ENCODE measurements at regions of chr17 and their contacts with region 1.

Region 1: DNA sequence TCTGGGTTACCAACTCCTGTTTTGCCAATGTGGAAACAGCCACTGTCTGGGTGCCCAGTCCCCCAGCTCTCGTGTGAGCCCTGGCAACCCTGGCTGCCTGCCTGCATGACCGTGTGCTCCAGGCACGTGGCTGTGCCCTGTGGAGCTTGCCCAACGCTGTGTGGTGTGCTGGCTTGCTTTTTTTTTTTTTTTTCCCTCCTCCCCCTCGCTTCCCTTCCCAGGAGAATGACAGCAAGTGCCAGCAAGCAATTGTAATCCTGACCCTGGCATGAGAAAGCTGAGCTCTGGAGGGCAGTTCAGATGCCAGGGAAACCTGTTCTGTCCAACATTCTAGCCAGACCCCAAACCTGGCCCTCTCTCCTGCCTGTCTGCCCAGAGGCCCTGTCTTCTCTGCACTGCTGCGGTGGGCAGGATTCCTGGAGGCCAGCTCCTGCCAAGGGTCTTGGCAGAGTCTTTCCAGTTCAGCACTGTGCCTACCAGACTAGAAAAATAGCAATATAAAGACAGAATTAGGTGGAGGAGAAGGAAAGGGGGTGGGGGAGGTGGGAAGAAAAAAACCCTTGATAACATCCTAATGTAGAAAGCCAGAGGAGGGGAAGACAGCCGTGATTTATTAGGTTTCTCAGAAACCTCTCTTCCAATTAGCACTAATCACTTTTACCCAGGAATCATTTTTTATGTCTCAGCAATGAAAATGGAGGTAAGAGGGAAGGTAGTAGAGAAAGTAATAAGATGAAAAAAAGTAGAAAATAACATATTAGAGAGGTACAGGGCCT is 9.0 kb downstream of the HLF start:
- DNase-seq: peak; percentile 71 to 77
- ATAC-seq: peak; percentile 77 to 95 (median 92)
- H3K4me3 ChIP-seq: peak overlapping the region in 5 of 10 donors; percentile 0 to 19 (median 5)
- H3K27ac ChIP-seq: peak overlapping the region; percentile 44 to 89 (median 81)
- H3K4me1 ChIP-seq: peaks cover 8 to 86% (median 62%) of the 10 kb centered on the region in 9 donors
- H3K27me3 ChIP-seq: peaks cover 0 to 3% (median 0%) of the 10 kb centered on the region in 7 donors
- CTCF ChIP-seq: no peak

Region 2: DNA sequence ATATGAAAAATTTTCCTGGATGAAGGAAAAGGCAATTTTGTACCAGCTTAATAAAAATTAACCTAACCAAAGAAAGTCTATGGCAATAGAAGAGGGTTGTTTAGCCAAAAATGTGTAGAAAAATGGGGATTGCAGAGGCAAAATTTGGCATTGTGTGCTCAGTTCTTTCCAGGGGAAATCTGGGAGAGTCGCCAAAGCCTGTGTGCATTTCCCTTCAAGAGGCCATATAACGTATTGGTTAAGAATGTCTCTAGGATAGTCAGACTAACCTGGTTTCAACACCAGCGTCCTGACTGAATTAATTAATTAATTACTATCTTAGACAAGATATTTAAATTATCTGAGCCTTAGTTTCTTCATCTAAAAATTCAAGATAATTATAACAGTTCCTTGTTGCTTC is 53.8 kb before region 1 on chr17:
- intact Hi-C with region 1: no loop called
- DNase-seq: no peak
- ATAC-seq: no peak
- H3K4me3 ChIP-seq: no peak overlapping the region
- H3K27ac ChIP-seq: no peak overlapping the region
- H3K4me1 ChIP-seq: no peaks in the 10 kb centered on the region
- H3K27me3 ChIP-seq: no peaks in the 10 kb centered on the region
- CTCF ChIP-seq: no peak

Region 3: GRCh38 chr17:55285340-55286301 is 11.9 kb after region 1 on chr17:
- intact Hi-C with region 1: loop called in 1 of 10 experiments (anchors 2 kb)
- DNase-seq: peak; percentile 81 to 94
- ATAC-seq: peak; percentile 79 to 93 (median 91)
- H3K4me3 ChIP-seq: peak overlapping the region in 1 of 10 donors; percentile 6
- H3K27ac ChIP-seq: peak overlapping the region; percentile 54 to 94 (median 84)
- H3K4me1 ChIP-seq: peaks cover 19 to 96% (median 80%) of the 10 kb centered on the region in 9 donors
- H3K27me3 ChIP-seq: no peaks in the 10 kb centered on the region
- CTCF ChIP-seq: no peak